Activated CD8-positive, alpha-beta T cell treated with anti-CD3 and anti-CD28 coated beads for 36 hours (primary cell): ENCODE measurements at regions of chr17 and their contacts with region 1.

Region 1: DNA sequence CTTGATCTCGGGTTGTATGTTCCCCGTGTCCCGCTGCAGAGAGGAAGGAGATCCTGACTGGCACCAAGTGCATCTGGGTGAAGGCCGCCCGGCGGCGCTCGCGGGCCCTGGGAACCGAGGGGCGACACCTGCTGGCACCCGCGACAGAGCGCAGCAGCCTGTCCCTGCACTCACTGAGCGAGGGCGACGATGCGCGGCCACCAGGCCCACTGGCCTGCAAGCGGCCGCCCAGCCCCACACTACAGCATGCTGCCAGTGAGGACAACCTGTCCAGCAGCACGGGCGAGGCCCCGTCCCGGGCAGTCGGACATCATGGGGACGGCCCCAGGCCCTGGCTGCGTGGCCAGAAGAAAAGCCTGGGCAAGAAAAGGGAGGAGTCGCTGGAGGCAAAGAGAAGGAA is 7.5 kb downstream of the BTBD17 start:
- DNase-seq: peak; percentile 83
- ATAC-seq: peak; percentile 91
- H3K4me3 Mint-ChIP-seq: no peak overlapping the region
- H3K27ac Mint-ChIP-seq: no peak overlapping the region
- H3K4me1 Mint-ChIP-seq: peaks cover 6% of the 10 kb centered on the region
- H3K27me3 Mint-ChIP-seq: peaks cover 55% of the 10 kb centered on the region
- CTCF ChIP-seq: peak; percentile 94

Region 2: GRCh38 chr17:74212913-74213791 is 141.0 kb before region 1 on chr17 and contains the start of gene TTYH2:
- CTCF ChIA-PET with region 1: no interaction called
- POLR2A ChIA-PET with region 1: no interaction called
- intact Hi-C with region 1: loop called (anchors 10 kb)
- DNase-seq: peak; percentile 65
- ATAC-seq: peak; percentile 61
- H3K4me3 Mint-ChIP-seq: peak within 1 kb of the TSS; percentile 74
- H3K27ac Mint-ChIP-seq: peak within 1 kb of the TSS; percentile 57
- H3K4me1 Mint-ChIP-seq: peaks cover 66% of the 10 kb centered on the region
- H3K27me3 Mint-ChIP-seq: no peaks in the 10 kb centered on the region
- CTCF ChIP-seq: peak; percentile 45
- total RNA-seq, gene TTYH2: 3.4 to 4.9 TPM

Region 3: DNA sequence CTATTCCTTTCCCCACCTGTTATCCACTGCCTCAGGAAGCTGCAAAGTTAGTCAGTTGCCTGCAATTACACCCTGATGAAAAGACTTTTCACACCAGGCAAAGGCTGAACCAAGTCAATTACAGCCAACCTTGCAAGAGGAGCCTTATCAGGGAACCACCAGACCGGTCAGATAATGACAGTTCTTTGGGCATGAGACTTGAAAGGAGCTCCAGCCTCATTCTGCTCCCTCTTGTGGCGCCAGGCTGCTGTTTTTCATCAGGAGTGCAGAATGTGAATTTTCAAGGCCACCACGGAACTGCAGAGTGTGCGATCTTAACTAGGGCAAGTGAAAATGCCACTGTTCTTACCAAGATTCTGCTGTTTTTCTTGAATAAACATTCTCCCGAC is 57.6 kb before region 1 on chr17:
- CTCF ChIA-PET with region 1: interaction called, 55 read pairs
- POLR2A ChIA-PET with region 1: interaction called, 4 read pairs
- intact Hi-C with region 1: loop called (anchors 5 kb)
- DNase-seq: peak; percentile 50
- ATAC-seq: no peak
- H3K4me3 Mint-ChIP-seq: no peak overlapping the region
- H3K27ac Mint-ChIP-seq: no peak overlapping the region
- H3K4me1 Mint-ChIP-seq: peaks cover 10% of the 10 kb centered on the region
- H3K27me3 Mint-ChIP-seq: peaks cover 5% of the 10 kb centered on the region
- CTCF ChIP-seq: no peak

Region 4: DNA sequence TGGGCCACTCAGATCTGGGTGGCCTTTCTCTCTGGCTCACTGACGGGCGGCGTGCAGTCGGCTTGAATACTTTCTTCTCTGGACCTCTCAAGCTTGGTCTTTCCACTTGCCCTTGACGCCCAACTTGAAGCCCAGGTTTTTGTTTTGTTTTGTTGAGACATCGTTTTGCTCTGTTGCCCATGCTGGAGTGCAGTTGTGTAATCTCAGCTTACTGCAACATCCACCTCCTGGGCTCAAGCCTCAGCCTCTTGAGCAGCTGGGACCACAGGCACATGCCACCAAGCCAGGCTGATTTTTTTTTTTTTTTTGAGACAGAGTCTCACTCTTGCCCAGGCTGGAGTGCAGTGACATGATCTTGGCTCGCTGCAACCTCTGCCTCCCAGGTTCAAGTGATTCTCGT is 50.8 kb before region 1 on chr17:
- CTCF ChIA-PET with region 1: interaction called, 55 read pairs
- POLR2A ChIA-PET with region 1: interaction called, 4 read pairs
- intact Hi-C with region 1: loop called (anchors 5 kb)
- DNase-seq: no peak
- ATAC-seq: no peak
- H3K4me3 Mint-ChIP-seq: no peak overlapping the region
- H3K27ac Mint-ChIP-seq: no peak overlapping the region
- H3K4me1 Mint-ChIP-seq: peaks cover 4% of the 10 kb centered on the region
- H3K27me3 Mint-ChIP-seq: peaks cover 8% of the 10 kb centered on the region
- CTCF ChIP-seq: no peak